ENCODE measurements at regions of chr1 and their contacts with region 1.

Region 1: GRCh38 chr1:156282479-156283222 is at the start of gene SMG5:
- DNase-seq: peak; percentile 94 to 96
- H3K4me3 ChIP-seq: peak within 1 kb of the TSS; percentile 74 to 93 (median 85)
- H3K27ac ChIP-seq: peak within 1 kb of the TSS; percentile 90
- H3K4me1 ChIP-seq: peaks cover 0 to 10% (median 3%) of the 10 kb centered on the region in 4 experiments; a peak in 2 of 7 replicates
- H3K27me3 ChIP-seq: no peaks in the 10 kb centered on the region
- CTCF ChIP-seq: no peak
- EP300 ChIP-seq: peak in 1 of 2 experiments; percentile 77; a peak in 1 of 3 replicates
- POLR2A ChIP-seq: peak; percentile 98 to 99
- RAD21 ChIP-seq: no peak
- total RNA-seq, gene SMG5: 94.7 and 98.0 TPM in 2 replicates

Region 2: DNA sequence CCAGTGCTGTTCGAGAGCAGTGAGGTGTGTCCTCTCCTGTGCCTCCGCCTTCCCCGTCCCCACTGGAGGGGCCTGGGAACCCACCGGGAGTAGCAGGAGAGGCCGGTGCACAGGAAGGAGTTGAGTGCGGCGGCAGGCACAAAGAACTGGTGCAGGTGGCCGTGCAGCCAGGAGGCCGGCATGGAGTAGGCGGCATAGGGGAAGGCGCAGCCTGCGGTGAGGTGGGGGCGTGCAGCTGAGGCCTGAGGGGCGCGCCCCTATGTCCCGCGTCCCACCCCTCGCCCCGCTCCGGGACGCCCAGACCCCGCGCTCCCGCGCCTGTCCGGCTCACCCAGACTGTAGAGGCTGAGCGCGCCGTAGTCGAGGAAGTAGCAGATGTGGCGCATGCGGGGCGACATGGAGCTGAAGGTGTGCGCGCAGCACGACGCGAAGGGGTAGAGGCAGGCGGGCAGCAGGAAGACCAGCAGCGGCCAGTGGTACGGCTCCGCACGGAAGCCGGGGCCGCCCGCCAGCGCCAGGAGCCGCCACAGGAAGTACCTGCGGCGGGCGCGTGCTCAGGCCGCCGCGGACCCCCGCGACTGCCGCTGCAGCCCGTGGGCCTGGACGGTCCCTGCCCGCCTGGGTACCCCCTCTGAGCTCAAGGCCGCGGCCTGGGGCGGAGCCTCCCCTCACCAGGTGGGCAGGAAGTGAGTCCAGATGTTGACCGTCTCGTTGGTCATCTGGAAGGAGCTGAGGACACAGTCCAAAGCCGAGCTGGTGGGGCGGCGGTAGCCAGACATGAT is 37.0 kb before region 1 on chr1:
- CTCF ChIA-PET with region 1: interaction called, 7 read pairs
- POLR2A ChIA-PET with region 1: interaction called, 102 read pairs
- DNase-seq: peak in 1 of 2 experiments; percentile 54
- H3K4me3 ChIP-seq: peak overlapping the region in 3 of 4 experiments; percentile 7 to 40 (median 10); a peak in 5 of 8 replicates
- H3K27ac ChIP-seq: no peak overlapping the region
- H3K4me1 ChIP-seq: peaks cover 0 to 16% (median 9%) of the 10 kb centered on the region in 4 experiments
- H3K27me3 ChIP-seq: no peaks in the 10 kb centered on the region
- CTCF ChIP-seq: no peak
- EP300 ChIP-seq: no peak
- POLR2A ChIP-seq: no peak
- RAD21 ChIP-seq: no peak

Region 3: DNA sequence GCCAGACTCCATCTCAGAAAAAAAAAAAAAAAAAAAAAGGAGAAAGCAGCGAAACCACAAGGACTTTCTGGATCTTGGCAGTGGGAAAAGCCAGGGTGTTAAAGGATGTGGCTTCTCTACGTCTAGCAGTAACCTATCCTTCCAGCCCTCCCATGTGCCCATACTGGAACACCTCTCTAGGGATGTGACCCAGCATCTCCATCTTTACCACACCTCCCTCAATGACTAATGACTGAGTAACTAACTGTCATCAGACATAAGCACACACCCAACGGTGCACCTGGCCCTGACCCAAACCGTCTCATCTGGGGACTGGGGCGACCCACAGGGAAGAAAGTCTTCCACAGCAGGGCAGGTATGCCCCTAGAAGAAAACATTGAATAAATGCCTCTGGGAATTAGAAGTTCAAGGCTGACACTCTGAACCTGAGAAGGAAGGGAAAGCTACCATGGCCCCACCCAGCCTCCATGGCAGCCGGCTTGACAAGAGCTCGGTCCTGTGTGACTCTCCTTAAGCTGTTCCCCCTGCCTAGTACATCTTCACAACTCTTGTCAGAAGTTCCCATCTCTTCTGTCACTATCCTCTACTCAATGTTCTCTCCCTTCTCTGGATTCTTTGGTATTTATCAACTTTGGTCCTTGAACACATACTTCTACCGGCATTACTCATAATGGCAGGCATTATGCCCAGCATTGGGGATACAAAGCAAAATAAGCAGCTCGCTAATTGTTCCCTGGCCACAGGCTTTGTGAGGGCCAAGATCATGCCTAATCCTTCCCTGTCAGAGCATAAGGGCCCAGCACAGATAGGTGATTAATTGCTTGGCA is 20.0 kb before region 1 on chr1:
- CTCF ChIA-PET with region 1: interaction called, 4 read pairs
- POLR2A ChIA-PET with region 1: interaction called, 10 read pairs
- DNase-seq: no peak
- H3K4me3 ChIP-seq: no peak overlapping the region
- H3K27ac ChIP-seq: no peak overlapping the region
- H3K4me1 ChIP-seq: no peaks in the 10 kb centered on the region
- H3K27me3 ChIP-seq: no peaks in the 10 kb centered on the region
- CTCF ChIP-seq: no peak
- EP300 ChIP-seq: no peak
- POLR2A ChIP-seq: no peak
- RAD21 ChIP-seq: no peak

Region 4: GRCh38 chr1:156270314-156270713 is 12.3 kb before region 1 on chr1:
- CTCF ChIA-PET with region 1: interaction called, 4 read pairs
- POLR2A ChIA-PET with region 1: interaction called, 41 read pairs
- DNase-seq: no peak
- H3K4me3 ChIP-seq: no peak overlapping the region
- H3K27ac ChIP-seq: no peak overlapping the region
- H3K4me1 ChIP-seq: no peaks in the 10 kb centered on the region
- H3K27me3 ChIP-seq: no peaks in the 10 kb centered on the region
- CTCF ChIP-seq: no peak
- EP300 ChIP-seq: no peak
- POLR2A ChIP-seq: no peak
- RAD21 ChIP-seq: no peak

Region 5: GRCh38 chr1:156295391-156295947 is 12.8 kb after region 1 on chr1 and contains the start of gene GLMP:
- CTCF ChIA-PET with region 1: interaction called, 3 read pairs
- POLR2A ChIA-PET with region 1: interaction called, 221 read pairs
- DNase-seq: peak in 1 of 2 experiments; percentile 70
- H3K4me3 ChIP-seq: peak within 1 kb of the TSS; percentile 62 to 84 (median 72)
- H3K27ac ChIP-seq: no peak within 1 kb of the TSS
- H3K4me1 ChIP-seq: peaks cover 0 to 12% (median 4%) of the 10 kb centered on the region in 4 experiments; a peak in 3 of 7 replicates
- H3K27me3 ChIP-seq: no peaks in the 10 kb centered on the region
- CTCF ChIP-seq: no peak
- EP300 ChIP-seq: no peak
- POLR2A ChIP-seq: peak in 1 of 2 experiments; percentile 61; a peak in 2 of 3 replicates
- RAD21 ChIP-seq: no peak
- total RNA-seq, gene GLMP: 47.6 and 48.1 TPM in 2 replicates

Region 6: GRCh38 chr1:156319664-156320063 is 37.0 kb after region 1 on chr1:
- CTCF ChIA-PET with region 1: interaction called, 25 read pairs
- POLR2A ChIA-PET with region 1: interaction called, 4 read pairs
- DNase-seq: no peak
- H3K4me3 ChIP-seq: no peak overlapping the region
- H3K27ac ChIP-seq: no peak overlapping the region
- H3K4me1 ChIP-seq: no peaks in the 10 kb centered on the region
- H3K27me3 ChIP-seq: no peaks in the 10 kb centered on the region
- CTCF ChIP-seq: peak in 1 of 3 experiments; percentile 15; a peak in 2 of 4 replicates
- EP300 ChIP-seq: no peak
- POLR2A ChIP-seq: no peak
- RAD21 ChIP-seq: peak in 1 of 2 experiments; percentile 33; a peak in 1 of 4 replicates

Region 7: GRCh38 chr1:156338180-156338973 is 55.7 kb after region 1 on chr1 and contains the starts of genes CCT3 and TSACC:
- CTCF ChIA-PET with region 1: interaction called, 5 read pairs
- POLR2A ChIA-PET with region 1: interaction called, 26 read pairs
- DNase-seq: peak; percentile 99 to 100
- H3K4me3 ChIP-seq: peak within 1 kb of the TSS; percentile 83 to 100 (median 94)
- H3K27ac ChIP-seq: peak within 1 kb of the TSS; percentile 81
- H3K4me1 ChIP-seq: 0 out of 7 replicates have a peak, but pooled peaks cover 0 to 2% (median 0%) of the 10 kb centered on the region in 4 experiments
- H3K27me3 ChIP-seq: no peaks in the 10 kb centered on the region
- CTCF ChIP-seq: no peak
- EP300 ChIP-seq: no peak
- POLR2A ChIP-seq: peak; percentile 54 to 91
- RAD21 ChIP-seq: no peak
- total RNA-seq, gene CCT3: 471 and 480 TPM in 2 replicates
- total RNA-seq, gene TSACC: 1.0 and 2.1 TPM in 2 replicates

Measured in H1 (cell line).